Activated naive CD4-positive, alpha-beta T cell treated with anti-CD3 and anti-CD28 coated beads, Interleukin-2, amount 10 ng/mL, durations not matched to agents 7 days and 5 days (primary cell): ENCODE measurements at regions of chr5 and their contacts with region 1.

Region 1: DNA sequence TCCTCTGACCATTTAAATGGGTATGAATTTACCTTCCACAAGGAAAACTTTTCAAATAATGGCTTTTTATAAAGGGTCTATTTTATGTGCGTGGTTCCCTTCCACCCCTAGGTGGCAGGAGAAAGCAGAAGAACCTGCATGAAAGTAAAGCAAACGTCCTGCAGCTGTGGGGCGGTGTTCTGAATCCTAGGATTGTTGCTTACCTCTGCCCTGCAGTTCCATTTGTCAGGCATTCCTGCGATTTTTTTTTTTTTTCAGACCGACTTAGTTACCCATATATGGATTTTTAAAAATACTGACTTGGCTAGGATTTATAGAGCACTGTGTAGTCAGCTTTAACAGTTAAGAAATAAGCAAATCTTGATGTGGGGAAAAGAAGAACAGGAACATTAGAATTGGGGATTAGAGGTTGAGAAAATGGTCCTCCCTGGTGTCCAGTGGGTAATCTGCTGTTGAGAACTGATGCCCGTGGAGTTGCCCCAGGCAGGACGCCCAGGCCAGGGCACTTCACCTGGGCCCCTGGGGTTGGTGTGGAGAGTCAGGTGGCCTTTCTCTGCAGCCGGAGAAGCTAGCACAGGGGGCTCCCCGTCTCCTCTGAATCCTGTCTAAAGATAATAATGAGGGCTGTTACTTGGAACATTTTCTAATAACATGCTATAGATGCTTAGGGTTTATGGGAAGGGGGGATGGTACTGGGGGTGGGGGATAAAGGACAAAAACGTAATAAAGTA is 30.4 kb upstream of the LTC4S start:
- DNase-seq: peak; percentile 69
- H3K4me3 Mint-ChIP-seq: no peak overlapping the region
- H3K27ac Mint-ChIP-seq: no peak overlapping the region
- H3K4me1 Mint-ChIP-seq: peaks cover 48% of the 10 kb centered on the region
- H3K27me3 Mint-ChIP-seq: no peaks in the 10 kb centered on the region

Region 2: DNA sequence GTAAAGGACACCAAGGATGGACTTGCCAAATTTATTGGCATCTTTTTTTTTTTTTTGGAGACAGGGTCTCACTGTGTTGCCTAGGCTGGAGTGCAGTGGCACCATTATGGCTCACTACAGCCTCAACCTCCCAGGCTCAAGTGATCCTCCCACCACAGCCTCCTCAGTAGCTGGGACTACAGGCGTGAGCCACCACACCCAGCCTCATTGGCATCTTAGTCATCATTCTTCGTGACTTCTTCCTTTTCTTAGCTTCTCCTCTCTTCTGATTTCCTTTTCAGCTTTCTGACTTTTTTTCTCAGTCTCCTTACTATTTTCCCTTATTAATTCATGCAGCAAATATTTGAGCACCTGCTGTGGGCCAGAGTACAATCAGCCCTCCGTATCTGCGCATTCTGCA is 24.6 kb before region 1 on chr5:
- CTCF ChIA-PET with region 1: interaction called, 10 read pairs
- DNase-seq: no peak
- H3K4me3 Mint-ChIP-seq: no peak overlapping the region
- H3K27ac Mint-ChIP-seq: peak overlapping the region; percentile 73
- H3K4me1 Mint-ChIP-seq: peaks cover 48% of the 10 kb centered on the region
- H3K27me3 Mint-ChIP-seq: no peaks in the 10 kb centered on the region

Region 3: GRCh38 chr5:179749857-179750508 is 13.4 kb before region 1 on chr5:
- CTCF ChIA-PET with region 1: interaction called, 17 read pairs
- DNase-seq: no peak
- H3K4me3 Mint-ChIP-seq: no peak overlapping the region
- H3K27ac Mint-ChIP-seq: no peak overlapping the region
- H3K4me1 Mint-ChIP-seq: peaks cover 22% of the 10 kb centered on the region
- H3K27me3 Mint-ChIP-seq: no peaks in the 10 kb centered on the region

Region 4: DNA sequence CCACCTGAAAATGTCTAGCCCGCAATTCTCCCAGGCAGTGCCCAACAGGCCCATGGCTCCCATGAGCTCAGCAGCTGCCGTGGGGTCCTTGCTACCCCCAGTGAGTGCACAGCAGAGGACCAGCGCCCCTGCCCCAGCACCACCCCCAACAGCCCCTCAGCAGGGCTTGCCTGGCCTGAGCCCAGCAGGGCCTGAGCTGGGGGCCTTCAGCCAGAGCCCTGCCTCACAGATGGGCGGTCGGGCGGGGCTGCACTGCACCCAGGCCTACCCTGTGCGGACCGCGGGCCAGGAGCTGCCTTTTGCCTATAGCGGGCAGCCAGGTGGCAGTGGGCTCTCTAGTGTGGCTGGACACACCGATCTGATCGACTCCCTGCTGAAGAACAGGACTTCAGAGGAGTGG is 11.1 kb after region 1 on chr5:
- CTCF ChIA-PET with region 1: interaction called, 17 read pairs
- DNase-seq: no peak
- H3K4me3 Mint-ChIP-seq: no peak overlapping the region
- H3K27ac Mint-ChIP-seq: no peak overlapping the region
- H3K4me1 Mint-ChIP-seq: no peaks in the 10 kb centered on the region
- H3K27me3 Mint-ChIP-seq: no peaks in the 10 kb centered on the region

Region 5: DNA sequence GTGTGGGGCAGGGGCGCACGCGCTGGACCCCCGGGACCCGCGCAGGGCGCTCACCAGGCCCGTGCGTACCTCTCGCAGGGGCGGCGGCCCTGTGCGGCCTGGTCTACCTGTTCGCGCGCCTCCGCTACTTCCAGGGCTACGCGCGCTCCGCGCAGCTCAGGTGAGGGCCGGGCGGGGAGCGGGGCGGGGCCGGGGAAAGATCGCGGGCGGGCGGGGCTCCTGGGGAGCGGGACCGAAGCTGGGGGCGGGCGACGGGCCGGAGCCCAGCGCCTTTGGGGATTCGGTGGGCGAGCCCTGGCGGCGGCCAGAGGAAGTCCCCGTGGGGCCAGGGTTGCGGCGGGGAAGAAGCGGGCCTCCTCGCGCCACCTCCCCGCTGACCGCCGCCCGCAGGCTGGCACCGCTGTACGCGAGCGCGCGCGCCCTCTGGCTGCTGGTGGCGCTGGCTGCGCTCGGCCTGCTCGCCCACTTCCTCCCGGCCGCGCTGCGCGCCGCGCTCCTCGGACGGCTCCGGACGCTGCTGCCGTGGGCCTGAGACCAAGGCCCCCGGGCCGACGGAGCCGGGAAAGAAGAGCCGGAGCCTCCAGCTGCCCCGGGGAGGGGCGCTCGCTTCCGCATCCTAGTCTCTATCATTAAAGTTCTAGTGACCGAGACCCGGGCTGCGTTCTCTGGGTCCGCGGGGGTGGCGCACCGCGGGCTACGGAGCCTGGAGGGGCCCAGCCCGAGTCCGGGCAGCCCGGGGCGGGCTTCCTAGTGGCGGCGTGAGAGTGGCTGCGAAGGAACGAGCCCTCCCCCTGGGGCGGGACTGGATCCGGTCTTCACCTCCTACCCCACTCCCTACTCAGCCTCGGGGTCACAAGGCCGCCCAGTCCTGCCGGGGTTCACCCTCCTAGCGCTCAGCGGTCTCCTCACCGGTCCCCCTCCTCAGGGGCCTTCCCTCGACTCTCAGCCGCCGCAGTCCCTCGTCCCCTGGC is 32.8 kb after region 1 on chr5:
- CTCF ChIA-PET with region 1: interaction called, 32 read pairs
- DNase-seq: peak; percentile 76
- H3K4me3 Mint-ChIP-seq: peak overlapping the region; percentile 60
- H3K27ac Mint-ChIP-seq: no peak overlapping the region
- H3K4me1 Mint-ChIP-seq: peaks cover 30% of the 10 kb centered on the region
- H3K27me3 Mint-ChIP-seq: peaks cover 21% of the 10 kb centered on the region